ENCODE measurements at regions of chr16 and their contacts with region 1.

Region 1: GRCh38 chr16:83856792-83857191 is 42.1 kb upstream of the MLYCD start:
- DNase-seq: no peak
- H3K4me3 ChIP-seq: no peak overlapping the region
- H3K27ac ChIP-seq: no peak overlapping the region
- H3K4me1 ChIP-seq: no peaks in the 10 kb centered on the region
- H3K27me3 ChIP-seq: no peaks in the 10 kb centered on the region
- CTCF ChIP-seq: no peak
- POLR2A ChIP-seq: no peak

Region 2: DNA sequence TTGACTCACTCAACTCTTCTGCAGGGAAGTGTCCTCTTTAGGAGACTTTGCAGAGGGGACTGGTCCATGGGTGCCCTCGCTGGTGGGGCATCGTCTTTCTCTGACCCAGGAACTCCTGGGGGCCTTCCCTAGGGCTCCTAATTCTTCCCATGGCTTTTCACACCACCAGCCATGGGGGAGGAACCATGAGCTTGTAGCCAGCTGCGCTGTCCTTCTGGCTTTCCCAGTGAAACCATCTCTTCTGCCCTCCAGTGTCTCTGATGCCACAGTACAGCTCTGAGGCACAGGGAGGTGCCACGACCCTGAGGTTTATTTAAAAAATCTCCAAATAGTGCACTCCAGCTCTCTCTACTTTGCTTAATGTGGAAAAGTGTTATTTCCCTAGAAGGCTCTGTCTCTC is 1924.1 kb before region 1 on chr16:
- intact Hi-C with region 1: loop called (anchors 5 kb)
- DNase-seq: no peak
- H3K4me3 ChIP-seq: no peak overlapping the region
- H3K27ac ChIP-seq: no peak overlapping the region
- H3K4me1 ChIP-seq: no peaks in the 10 kb centered on the region
- H3K27me3 ChIP-seq: no peaks in the 10 kb centered on the region
- CTCF ChIP-seq: no peak
- POLR2A ChIP-seq: no peak

Region 3: GRCh38 chr16:83315271-83315670 is 541.5 kb before region 1 on chr16:
- intact Hi-C with region 1: no loop called
- DNase-seq: no peak
- H3K4me3 ChIP-seq: no peak overlapping the region
- H3K27ac ChIP-seq: no peak overlapping the region
- H3K4me1 ChIP-seq: no peaks in the 10 kb centered on the region
- H3K27me3 ChIP-seq: no peaks in the 10 kb centered on the region
- CTCF ChIP-seq: no peak
- POLR2A ChIP-seq: no peak

Region 4: GRCh38 chr16:83561876-83562275 is 294.9 kb before region 1 on chr16:
- intact Hi-C with region 1: no loop called
- DNase-seq: no peak
- H3K4me3 ChIP-seq: no peak overlapping the region
- H3K27ac ChIP-seq: no peak overlapping the region
- H3K4me1 ChIP-seq: no peaks in the 10 kb centered on the region
- H3K27me3 ChIP-seq: no peaks in the 10 kb centered on the region
- CTCF ChIP-seq: no peak
- POLR2A ChIP-seq: no peak